ENCODE measurements at regions of chr2 and their contacts with region 1.

Region 1: GRCh38 chr2:127857265-127857808 is 618 bp downstream of the POLR2D start:
- DNase-seq: peak in 8 of 35 experiments; percentile 1 to 37 (median 14)
- ATAC-seq: peak in 2 of 4 experiments; percentile 2 to 6
- H3K4me3 ChIP-seq: peak overlapping the region; percentile 68 to 82
- H3K4me3 Mint-ChIP-seq: peak overlapping the region; percentile 93 to 95 (median 94)
- H3K27ac ChIP-seq: peak overlapping the region; percentile 55
- H3K27ac Mint-ChIP-seq: peak overlapping the region; percentile 68 to 89
- H3K4me1 ChIP-seq: peaks cover 3 to 42% of the 10 kb centered on the region in 2 experiments
- H3K4me1 Mint-ChIP-seq: peaks cover 51 to 59% (median 52%) of the 10 kb centered on the region in 3 donors
- H3K27me3 ChIP-seq: no peaks in the 10 kb centered on the region
- H3K27me3 Mint-ChIP-seq: no peaks in the 10 kb centered on the region

Region 2: DNA sequence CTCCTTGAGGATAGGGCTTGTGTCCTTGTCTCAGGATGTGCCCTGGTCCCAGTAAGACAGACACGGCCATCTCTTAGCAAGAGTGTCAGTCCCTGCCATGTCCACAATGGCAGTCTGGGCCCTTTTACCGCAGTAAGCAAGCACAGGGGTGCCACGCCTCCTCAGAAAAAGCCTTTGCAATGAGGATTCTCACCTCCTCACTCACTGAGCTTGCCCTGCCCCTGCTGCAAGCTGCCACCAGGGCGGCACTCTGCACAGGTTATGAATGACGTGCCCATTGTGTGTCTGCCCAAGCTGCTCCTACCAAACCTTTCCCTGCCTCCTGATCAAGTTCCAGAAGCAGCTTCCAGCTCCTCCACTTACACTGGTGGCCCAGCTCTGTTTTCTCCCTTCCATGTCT is 586.7 kb before region 1 on chr2:
- CTCF ChIA-PET with region 1: no interaction called
- POLR2A ChIA-PET with region 1: interaction called in 1 of 2 experiments, 20 read pairs
- DNase-seq: no peak
- ATAC-seq: no peak
- H3K4me3 ChIP-seq: no peak overlapping the region
- H3K4me3 Mint-ChIP-seq: no peak overlapping the region
- H3K27ac ChIP-seq: no peak overlapping the region
- H3K27ac Mint-ChIP-seq: no peak overlapping the region
- H3K4me1 ChIP-seq: no peaks in the 10 kb centered on the region
- H3K4me1 Mint-ChIP-seq: peaks cover 0 to 8% (median 0%) of the 10 kb centered on the region in 3 donors
- H3K27me3 ChIP-seq: no peaks in the 10 kb centered on the region
- H3K27me3 Mint-ChIP-seq: no peaks in the 10 kb centered on the region

Region 3: GRCh38 chr2:127829845-127830246 is 27.5 kb before region 1 on chr2:
- CTCF ChIA-PET with region 1: interaction called in 1 of 2 experiments, 4 read pairs
- POLR2A ChIA-PET with region 1: interaction called, 5 to 11 read pairs
- DNase-seq: peak; percentile 1 to 85 (median 66)
- ATAC-seq: peak; percentile 92 to 100 (median 96)
- H3K4me3 ChIP-seq: no peak overlapping the region
- H3K4me3 Mint-ChIP-seq: peak overlapping the region in 2 of 3 donors; percentile 50 to 58
- H3K27ac ChIP-seq: peak overlapping the region; percentile 80
- H3K27ac Mint-ChIP-seq: peak overlapping the region; percentile 81 to 90
- H3K4me1 ChIP-seq: peaks cover 8 to 24% of the 10 kb centered on the region in 2 experiments
- H3K4me1 Mint-ChIP-seq: peaks cover 24 to 33% (median 26%) of the 10 kb centered on the region in 3 donors
- H3K27me3 ChIP-seq: peaks cover 0 to 7% of the 10 kb centered on the region in 2 experiments
- H3K27me3 Mint-ChIP-seq: no peaks in the 10 kb centered on the region